ENCODE measurements at regions of chr10 and their contacts with region 1.

Region 1: DNA sequence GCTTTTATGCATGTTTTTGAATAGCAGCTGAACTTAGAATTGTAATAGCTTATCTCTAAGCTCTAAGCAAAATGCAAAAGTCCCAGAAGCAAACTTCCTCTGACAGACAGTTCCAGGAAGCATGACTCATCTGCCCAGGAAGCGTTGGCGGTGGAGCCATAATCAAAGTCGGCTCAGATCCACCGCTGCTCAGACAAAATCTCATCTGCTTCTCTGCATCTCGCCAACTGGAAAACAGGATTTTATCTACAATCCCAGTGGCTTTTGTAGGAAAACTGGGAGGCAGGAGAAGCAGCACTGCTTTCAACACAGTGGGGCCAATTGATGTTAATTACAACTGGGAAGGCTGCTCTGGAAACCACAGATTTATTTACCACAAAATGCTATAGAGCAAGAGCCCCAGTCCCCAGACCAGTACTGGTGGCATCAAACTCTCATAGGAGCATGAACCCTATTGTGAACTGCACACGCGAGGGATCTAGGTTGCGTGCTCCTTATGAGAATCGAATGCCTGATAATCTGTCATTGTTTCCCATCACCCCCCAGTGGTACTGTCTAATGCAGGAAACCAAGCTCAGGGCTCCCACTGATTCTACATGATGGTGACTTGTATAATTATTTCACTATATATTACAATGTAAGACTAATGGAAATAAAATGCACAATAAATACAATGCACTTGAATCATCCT is 99.9 kb downstream of the CUBN start:
- DNase-seq: peak; percentile 82
- H3K4me3 Mint-ChIP-seq: peak overlapping the region; percentile 19
- H3K27ac Mint-ChIP-seq: peak overlapping the region; percentile 39
- H3K4me1 Mint-ChIP-seq: peaks cover 19% of the 10 kb centered on the region
- H3K27me3 Mint-ChIP-seq: no peaks in the 10 kb centered on the region
- CTCF ChIP-seq: no peak

Region 2: GRCh38 chr10:16809074-16809718 is 220.5 kb before region 1 on chr10:
- CTCF ChIA-PET with region 1: no interaction called
- POLR2A ChIA-PET with region 1: no interaction called
- intact Hi-C with region 1: no loop called
- DNase-seq: peak; percentile 55
- H3K4me3 Mint-ChIP-seq: no peak overlapping the region
- H3K27ac Mint-ChIP-seq: no peak overlapping the region
- H3K4me1 Mint-ChIP-seq: no peaks in the 10 kb centered on the region
- H3K27me3 Mint-ChIP-seq: no peaks in the 10 kb centered on the region
- CTCF ChIP-seq: peak; percentile 49

Region 3: DNA sequence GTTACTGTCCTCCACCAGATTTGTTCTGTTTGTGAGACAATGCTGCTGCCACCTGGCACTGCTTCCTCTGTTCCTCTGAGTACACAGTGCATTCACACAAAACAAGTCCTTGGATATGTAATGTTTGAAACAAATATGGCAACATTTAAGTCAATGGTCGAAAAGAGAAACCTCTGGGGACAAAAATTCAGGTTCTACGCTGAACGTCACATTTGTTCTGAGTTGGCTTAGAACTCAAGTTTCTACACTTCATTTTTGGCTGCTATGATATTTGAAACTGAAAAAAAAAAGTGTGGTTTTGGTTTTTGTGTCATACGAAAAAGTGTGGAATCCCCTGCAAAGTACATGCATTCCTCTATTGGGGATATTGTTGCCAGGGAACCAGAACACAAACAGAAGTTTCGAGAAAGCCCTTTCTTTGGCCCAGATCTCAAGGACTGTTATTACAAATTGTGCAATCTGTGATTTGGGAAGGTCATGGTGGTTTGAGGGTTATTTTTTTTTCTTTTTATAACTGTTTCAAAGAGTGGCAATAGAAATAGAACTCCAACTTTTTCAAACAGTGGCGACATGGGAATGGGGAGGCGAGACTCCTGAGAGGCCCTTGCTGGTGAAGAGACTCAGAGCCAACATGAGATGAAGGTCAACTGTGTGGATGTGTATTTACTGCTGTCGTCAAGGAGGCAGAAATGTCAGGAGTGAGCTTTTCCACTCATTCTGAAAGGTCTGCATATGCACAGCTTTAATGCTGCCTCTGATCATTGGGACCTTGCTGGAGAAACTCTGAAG is 27.6 kb before region 1 on chr10:
- CTCF ChIA-PET with region 1: no interaction called
- POLR2A ChIA-PET with region 1: no interaction called
- intact Hi-C with region 1: no loop called
- DNase-seq: peak; percentile 58
- H3K4me3 Mint-ChIP-seq: no peak overlapping the region
- H3K27ac Mint-ChIP-seq: peak overlapping the region; percentile 86
- H3K4me1 Mint-ChIP-seq: peaks cover 40% of the 10 kb centered on the region
- H3K27me3 Mint-ChIP-seq: no peaks in the 10 kb centered on the region
- CTCF ChIP-seq: no peak

Region 4: GRCh38 chr10:17053513-17053912 is 23.8 kb after region 1 on chr10:
- CTCF ChIA-PET with region 1: no interaction called
- POLR2A ChIA-PET with region 1: no interaction called
- intact Hi-C with region 1: no loop called
- DNase-seq: no peak
- H3K4me3 Mint-ChIP-seq: no peak overlapping the region
- H3K27ac Mint-ChIP-seq: no peak overlapping the region
- H3K4me1 Mint-ChIP-seq: peaks cover 5% of the 10 kb centered on the region
- H3K27me3 Mint-ChIP-seq: no peaks in the 10 kb centered on the region
- CTCF ChIP-seq: no peak

Region 5: DNA sequence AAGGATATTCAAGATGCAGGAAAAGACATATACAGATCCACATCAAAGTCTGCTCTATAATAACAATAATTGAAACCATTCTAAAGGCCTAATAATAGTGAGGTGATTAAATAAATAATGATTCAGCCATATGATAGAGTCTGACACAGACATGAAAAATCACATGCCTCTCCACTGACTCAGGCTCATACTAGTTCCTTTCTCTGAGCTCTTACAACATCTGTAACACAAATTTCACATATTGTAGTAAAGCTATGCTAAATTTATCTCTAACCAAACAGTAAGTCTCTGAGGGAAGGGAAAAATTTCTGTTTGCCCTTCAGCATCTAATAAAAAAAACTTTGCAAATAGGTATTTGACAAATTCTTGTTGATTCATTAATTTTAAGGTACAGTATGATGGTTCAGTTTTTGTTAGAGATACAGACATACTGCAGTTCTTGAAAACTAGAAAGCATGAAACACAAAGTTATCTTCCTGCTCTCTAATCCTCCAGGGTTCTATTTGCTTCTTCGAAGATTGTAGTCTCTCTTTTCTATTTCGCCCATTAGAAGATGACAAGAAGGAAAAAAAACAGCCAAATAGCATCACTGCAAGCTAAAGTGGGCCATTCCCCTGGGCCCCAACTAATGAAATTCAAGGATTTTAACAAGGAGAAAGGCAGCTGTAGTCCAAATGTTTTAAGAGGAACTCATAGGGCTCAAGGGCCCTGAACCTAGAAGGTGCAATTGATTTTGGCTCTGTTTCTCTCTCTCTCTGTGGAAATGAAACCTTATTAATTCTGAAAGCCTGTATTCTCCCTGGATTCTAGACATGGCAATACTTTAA is 46.0 kb after region 1 on chr10:
- CTCF ChIA-PET with region 1: interaction called, 4 read pairs
- POLR2A ChIA-PET with region 1: no interaction called
- intact Hi-C with region 1: loop called (anchors 5 kb)
- DNase-seq: peak; percentile 87
- H3K4me3 Mint-ChIP-seq: no peak overlapping the region
- H3K27ac Mint-ChIP-seq: peak overlapping the region; percentile 54
- H3K4me1 Mint-ChIP-seq: peaks cover 29% of the 10 kb centered on the region
- H3K27me3 Mint-ChIP-seq: no peaks in the 10 kb centered on the region
- CTCF ChIP-seq: no peak

Measured in MCF 10A (cell line).